WTC11 (cell line): ENCODE measurements at regions of chr2 and their contacts with region 1.

Region 1: GRCh38 chr2:176096986-176097819 is 2.4 kb upstream of the HOXD12 start:
- DNase-seq: peak; percentile 93
- ATAC-seq: peak; percentile 68
- H3K4me3 Mint-ChIP-seq: peak overlapping the region; percentile 65
- H3K27ac Mint-ChIP-seq: peak overlapping the region; percentile 37; the same call in 1 of the 2 replicates
- H3K4me1 Mint-ChIP-seq: peaks cover 65% of the 10 kb centered on the region
- H3K27me3 Mint-ChIP-seq: peaks cover 96% of the 10 kb centered on the region
- CTCF ChIP-seq: peak; percentile 74

Region 2: DNA sequence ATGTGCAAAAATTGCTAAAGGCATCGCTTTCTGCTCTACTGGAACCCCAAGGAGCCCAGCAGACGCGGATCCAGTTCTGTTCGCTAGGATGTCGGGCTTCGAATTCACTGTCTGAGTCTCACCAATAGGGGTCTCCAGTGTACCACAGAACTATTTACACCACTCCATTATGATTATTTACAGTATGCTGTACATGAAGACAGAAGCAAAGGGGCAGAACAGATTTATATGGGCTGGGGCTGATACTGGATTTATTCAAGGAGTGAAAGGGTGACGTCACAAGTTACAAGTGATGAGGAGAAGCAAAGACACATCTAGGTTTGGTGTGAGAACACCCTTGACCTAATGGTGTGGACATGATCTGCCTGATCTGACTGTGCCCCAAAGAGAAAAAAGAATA is 730.4 kb before region 1 on chr2:
- CTCF ChIA-PET with region 1: interaction called, 12 read pairs
- POLR2A ChIA-PET with region 1: no interaction called
- DNase-seq: peak; percentile 45
- ATAC-seq: peak; percentile 93
- H3K4me3 Mint-ChIP-seq: no peak overlapping the region
- H3K27ac Mint-ChIP-seq: no peak overlapping the region
- H3K4me1 Mint-ChIP-seq: peaks cover 7% of the 10 kb centered on the region
- H3K27me3 Mint-ChIP-seq: peaks cover 6% of the 10 kb centered on the region; the same call in 1 of the 2 replicates
- CTCF ChIP-seq: peak; percentile 81

Region 3: GRCh38 chr2:175690113-175690837 is 406.9 kb before region 1 on chr2:
- CTCF ChIA-PET with region 1: interaction called, 17 read pairs
- POLR2A ChIA-PET with region 1: no interaction called
- DNase-seq: peak; percentile 21
- ATAC-seq: peak; percentile 60; the same call in 1 of the 2 replicates
- H3K4me3 Mint-ChIP-seq: no peak overlapping the region
- H3K27ac Mint-ChIP-seq: no peak overlapping the region
- H3K4me1 Mint-ChIP-seq: peaks cover 5% of the 10 kb centered on the region
- H3K27me3 Mint-ChIP-seq: no peaks in the 10 kb centered on the region
- CTCF ChIP-seq: peak; percentile 17; the same call in 1 of the 2 replicates

Region 4: GRCh38 chr2:176079831-176080539 is 17.2 kb before region 1 on chr2:
- CTCF ChIA-PET with region 1: interaction called, 56 read pairs
- POLR2A ChIA-PET with region 1: interaction called, 4 read pairs
- DNase-seq: peak; percentile 90
- ATAC-seq: peak; percentile 77
- H3K4me3 Mint-ChIP-seq: peak overlapping the region; percentile 81
- H3K27ac Mint-ChIP-seq: no peak overlapping the region
- H3K4me1 Mint-ChIP-seq: peaks cover 49% of the 10 kb centered on the region
- H3K27me3 Mint-ChIP-seq: peaks cover 98% of the 10 kb centered on the region
- CTCF ChIP-seq: peak; percentile 98

Region 5: GRCh38 chr2:176110975-176111663 is 13.9 kb after region 1 on chr2:
- CTCF ChIA-PET with region 1: interaction called, 14 read pairs
- POLR2A ChIA-PET with region 1: no interaction called
- DNase-seq: peak; percentile 80
- ATAC-seq: peak; percentile 12
- H3K4me3 Mint-ChIP-seq: no peak overlapping the region
- H3K27ac Mint-ChIP-seq: no peak overlapping the region
- H3K4me1 Mint-ChIP-seq: peaks cover 31% of the 10 kb centered on the region
- H3K27me3 Mint-ChIP-seq: peaks cover 98% of the 10 kb centered on the region
- CTCF ChIP-seq: peak; percentile 40; the same call in 1 of the 2 replicates

Region 6: DNA sequence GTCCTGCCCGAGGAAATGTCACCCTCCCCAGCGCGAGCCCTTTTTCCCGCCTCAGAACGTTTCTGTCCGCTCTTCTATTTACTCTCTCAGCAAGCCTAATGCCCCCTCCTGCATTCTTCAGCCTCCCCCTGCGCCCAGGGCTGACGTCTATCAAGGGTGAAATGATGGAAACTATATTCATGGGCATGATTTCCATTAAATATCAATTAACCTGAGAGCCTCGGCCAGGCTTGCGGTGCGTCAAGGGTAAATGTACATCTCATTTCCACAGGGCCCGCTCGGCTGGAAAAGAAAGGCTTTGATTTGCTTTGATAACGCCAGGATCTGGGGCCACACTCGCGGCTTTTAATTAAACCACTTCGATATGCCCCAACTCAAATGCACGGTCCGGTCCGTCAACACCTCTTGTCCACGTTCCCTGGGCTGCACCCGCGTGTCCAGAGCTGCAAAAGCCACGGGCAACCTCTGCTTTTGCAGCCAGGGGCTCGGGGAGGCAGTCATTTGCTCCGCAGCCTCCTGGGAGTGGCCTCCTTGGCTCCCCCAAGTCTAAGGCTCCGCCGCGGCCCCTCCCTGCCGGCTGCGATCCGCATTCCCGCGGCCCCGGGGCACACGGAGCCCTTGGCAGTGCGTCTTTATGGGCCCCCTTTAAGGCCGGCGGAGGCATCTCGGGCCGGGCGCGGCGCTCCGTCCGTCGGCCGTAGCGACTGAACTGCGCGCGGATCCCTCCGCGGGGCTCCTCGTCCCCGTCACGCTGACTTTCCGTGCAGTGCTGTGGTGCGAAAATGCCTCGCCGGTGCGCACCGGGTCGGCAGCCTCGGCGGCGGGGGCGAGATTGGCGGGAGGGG is 32.0 kb after region 1 on chr2 and contains the start of gene HOXD8:
- CTCF ChIA-PET with region 1: no interaction called
- POLR2A ChIA-PET with region 1: no interaction called
- DNase-seq: peak; percentile 65
- ATAC-seq: peak; percentile 33
- H3K4me3 Mint-ChIP-seq: peak within 1 kb of the TSS; percentile 59
- H3K27ac Mint-ChIP-seq: no peak within 1 kb of the TSS
- H3K4me1 Mint-ChIP-seq: peaks cover 23% of the 10 kb centered on the region
- H3K27me3 Mint-ChIP-seq: peaks cover 98% of the 10 kb centered on the region
- CTCF ChIP-seq: no peak
- total RNA-seq, gene HOXD8: not detected in 3 replicates